AG04449 (cell line): ENCODE measurements at regions of chr9 and their contacts with region 1.

Region 1: GRCh38 chr9:12775679-12776512 is 1.1 kb downstream of the LURAP1L start:
- DNase-seq: no peak
- H3K4me3 ChIP-seq: peak overlapping the region; percentile 85
- CTCF ChIP-seq: peak; percentile 72

Region 2: DNA sequence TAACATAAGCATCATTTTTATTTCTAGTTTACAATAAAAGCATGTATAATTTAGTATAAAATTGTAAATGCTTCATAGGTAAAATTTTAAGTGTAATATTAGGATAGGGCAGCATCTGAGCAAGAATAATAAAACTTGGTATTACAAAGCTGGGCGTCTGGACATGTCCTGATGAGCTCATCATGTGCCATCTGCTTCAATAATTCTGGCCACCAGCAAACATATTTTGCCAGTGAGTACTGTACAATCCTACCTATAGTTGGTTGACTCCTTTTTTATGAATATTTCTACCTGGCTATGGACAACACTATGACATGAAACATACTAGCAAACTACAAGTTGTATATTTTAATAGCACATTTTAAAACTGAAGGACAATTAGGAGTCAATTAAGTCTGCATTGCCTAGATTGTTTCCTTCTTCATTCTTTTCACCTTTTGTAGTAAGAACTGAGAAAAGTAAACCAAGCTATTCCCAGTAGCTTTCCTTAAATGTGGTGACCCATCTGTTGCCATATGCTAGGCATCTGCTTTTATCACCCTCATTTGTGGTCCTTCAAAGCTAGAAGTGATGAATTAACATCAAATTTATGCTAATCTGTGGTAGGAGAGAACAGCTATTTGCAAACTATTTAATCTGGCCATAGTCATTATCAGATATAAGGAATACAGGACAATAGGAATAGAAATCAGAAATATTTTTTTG is 22.3 kb after region 1 on chr9:
- CTCF ChIA-PET with region 1: interaction called, 16 read pairs
- POLR2A ChIA-PET with region 1: no interaction called
- DNase-seq: no peak
- H3K4me3 ChIP-seq: no peak overlapping the region
- CTCF ChIP-seq: no peak

Region 3: DNA sequence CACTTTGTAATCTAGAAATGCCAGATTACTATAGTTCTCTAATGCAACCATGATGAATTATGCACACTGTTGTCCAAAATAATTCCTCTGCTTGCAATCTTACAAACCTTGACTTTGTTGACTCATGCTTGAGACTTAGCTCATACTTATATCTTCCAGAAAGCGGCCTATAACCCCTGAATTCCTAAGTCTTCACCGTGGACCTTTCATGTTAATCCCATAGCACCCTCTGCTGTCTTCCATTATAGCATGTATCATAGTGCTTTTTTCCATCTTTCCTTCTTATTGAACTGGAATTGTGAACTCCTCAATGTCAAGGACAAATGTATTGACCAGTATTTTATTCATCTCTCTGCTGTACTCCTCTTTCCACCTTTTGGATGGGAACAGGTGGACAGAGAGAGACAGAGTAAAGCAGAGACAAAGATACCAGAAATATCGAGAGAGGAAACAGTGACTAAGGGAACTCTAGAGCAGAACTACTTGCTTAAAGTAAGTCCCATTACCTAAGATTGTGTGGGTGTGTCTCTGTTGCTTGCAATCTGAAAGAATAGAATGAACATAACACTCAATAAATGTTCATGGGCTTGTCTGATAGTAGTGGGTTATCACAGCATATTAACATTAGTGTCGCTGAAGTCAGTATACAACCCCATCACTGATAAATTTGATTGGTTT is 109.0 kb after region 1 on chr9:
- CTCF ChIA-PET with region 1: interaction called, 20 read pairs
- POLR2A ChIA-PET with region 1: interaction called, 3 read pairs
- DNase-seq: peak; percentile 44
- H3K4me3 ChIP-seq: no peak overlapping the region
- CTCF ChIP-seq: peak; percentile 37